ENCODE measurements at regions of chr1 and their contacts with region 1.

Region 1: DNA sequence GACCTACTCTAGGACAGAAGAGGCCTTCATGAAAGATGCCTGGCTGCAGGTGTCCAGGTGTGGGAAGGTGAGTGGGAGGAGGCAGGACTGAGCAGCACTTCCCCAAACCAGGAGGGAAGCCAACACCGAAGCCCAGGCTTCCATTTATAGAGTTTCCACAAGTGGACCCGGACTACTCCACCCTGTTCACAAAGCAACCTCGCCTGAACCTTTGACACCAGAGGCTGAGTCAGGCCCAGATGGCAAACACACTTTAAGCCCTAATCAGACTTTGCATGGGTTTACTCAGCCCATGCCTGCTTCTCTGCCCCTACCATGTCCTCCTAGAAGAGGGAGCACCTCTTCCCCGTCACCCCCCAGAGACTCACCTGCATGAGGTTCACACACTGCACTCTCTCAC is 14.0 kb downstream of the PRR9 start:
- DNase-seq: no peak
- CTCF ChIP-seq: no peak

Region 2: GRCh38 chr1:152654110-152654509 is 577.3 kb before region 1 on chr1:
- CTCF ChIA-PET with region 1: interaction called, 14 read pairs
- POLR2A ChIA-PET with region 1: no interaction called
- DNase-seq: peak; percentile 49
- CTCF ChIP-seq: peak; percentile 66

Region 3: DNA sequence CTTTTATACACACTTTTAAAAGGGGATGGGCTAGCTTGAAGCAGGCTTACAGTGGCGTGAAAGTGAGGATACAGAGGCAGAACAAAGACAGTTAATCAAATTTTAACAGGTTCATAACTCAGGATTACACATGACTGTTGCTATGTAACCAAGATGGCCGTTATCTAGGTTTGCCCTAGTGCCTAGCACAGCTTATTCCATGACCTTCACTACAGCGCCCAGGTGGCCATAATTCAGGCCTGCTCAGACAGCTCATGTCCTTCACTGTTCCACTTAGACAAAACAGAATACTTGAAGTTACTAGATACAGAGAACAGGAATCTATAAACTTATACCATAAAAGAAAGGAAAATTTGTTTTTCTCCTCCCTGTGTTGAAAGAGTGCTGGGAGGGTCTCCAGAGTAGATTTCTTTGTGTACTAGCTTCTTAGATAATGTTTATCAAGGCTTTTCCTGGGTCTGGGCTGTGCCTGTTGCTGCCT is 111.8 kb before region 1 on chr1:
- CTCF ChIA-PET with region 1: no interaction called
- POLR2A ChIA-PET with region 1: no interaction called
- DNase-seq: no peak
- CTCF ChIP-seq: no peak

Region 4: GRCh38 chr1:153220606-153221303 is 10.6 kb before region 1 on chr1:
- CTCF ChIA-PET with region 1: interaction called, 19 read pairs
- POLR2A ChIA-PET with region 1: no interaction called
- DNase-seq: no peak
- CTCF ChIP-seq: no peak

Region 5: DNA sequence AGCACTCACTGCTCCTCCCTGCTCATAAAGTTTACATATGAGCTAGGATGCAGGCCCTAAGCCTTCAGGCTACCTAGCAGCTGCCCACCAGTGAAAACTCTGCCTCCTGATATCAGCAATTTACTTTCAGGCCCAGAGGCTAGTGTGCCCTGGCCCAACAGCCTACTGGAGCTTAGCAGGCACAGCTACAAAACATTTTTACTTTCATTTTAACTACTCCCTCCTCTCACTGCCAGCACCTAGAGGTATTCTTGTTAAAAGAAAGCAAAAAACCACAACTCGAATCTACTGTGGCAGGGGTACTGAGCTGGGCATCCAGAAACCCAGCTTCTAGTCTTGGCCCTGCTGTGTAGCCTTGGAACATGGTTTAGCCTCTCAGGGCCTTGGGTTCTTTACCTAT is 22.3 kb after region 1 on chr1:
- CTCF ChIA-PET with region 1: interaction called, 19 read pairs
- POLR2A ChIA-PET with region 1: no interaction called
- DNase-seq: no peak
- CTCF ChIP-seq: no peak

Measured in GM10248 (cell line).